H1 (cell line): ENCODE measurements at regions of chr1 and their contacts with region 1.

Region 1: DNA sequence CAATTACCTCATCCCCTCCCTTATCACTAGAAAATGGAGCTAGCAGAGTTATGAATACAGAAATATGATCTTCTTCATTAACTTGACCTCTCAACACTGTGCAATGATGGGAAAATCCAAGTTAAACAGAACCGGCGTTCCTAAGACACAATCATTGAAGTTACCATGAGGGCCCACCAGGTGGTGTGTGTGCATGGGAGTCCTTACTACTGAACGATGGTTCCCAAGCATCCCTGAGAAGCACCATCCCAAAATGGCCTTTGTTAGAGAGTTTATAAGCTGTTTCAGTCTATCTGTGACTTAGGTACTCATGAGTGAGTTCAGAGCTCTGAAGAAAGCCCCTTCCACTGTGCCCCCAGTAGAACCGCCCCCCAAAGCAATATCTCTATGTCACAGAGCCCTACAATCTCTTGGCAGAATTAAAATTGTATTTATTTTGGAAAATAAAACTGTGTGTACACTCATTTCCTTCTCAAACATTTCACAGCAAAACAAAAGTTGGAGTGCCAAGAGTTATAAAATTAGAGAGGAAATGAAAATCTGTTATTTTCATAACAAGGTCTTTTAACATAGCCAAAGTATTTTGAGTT is 56.8 kb downstream of the PLD5 start:
- DNase-seq: peak; percentile 13 to 66
- H3K4me3 ChIP-seq: no peak overlapping the region
- H3K27ac ChIP-seq: no peak overlapping the region
- H3K4me1 ChIP-seq: no peaks in the 10 kb centered on the region
- H3K27me3 ChIP-seq: no peaks in the 10 kb centered on the region
- CTCF ChIP-seq: peak; percentile 54 to 82 (median 73)
- EP300 ChIP-seq: no peak
- POLR2A ChIP-seq: no peak
- RAD21 ChIP-seq: peak; percentile 83 to 86

Region 2: GRCh38 chr1:242454262-242455045 is 13.2 kb before region 1 on chr1:
- CTCF ChIA-PET with region 1: interaction called, 57 read pairs
- POLR2A ChIA-PET with region 1: interaction called, 4 read pairs
- DNase-seq: no peak
- H3K4me3 ChIP-seq: no peak overlapping the region
- H3K27ac ChIP-seq: no peak overlapping the region
- H3K4me1 ChIP-seq: peaks cover 2 to 7% (median 3%) of the 10 kb centered on the region in 4 experiments; a peak in 4 of 7 replicates
- H3K27me3 ChIP-seq: no peaks in the 10 kb centered on the region
- CTCF ChIP-seq: peak in 2 of 3 experiments; percentile 62 to 68; a peak in 3 of 4 replicates
- EP300 ChIP-seq: no peak
- POLR2A ChIP-seq: no peak
- RAD21 ChIP-seq: peak; percentile 83 to 84

Region 3: DNA sequence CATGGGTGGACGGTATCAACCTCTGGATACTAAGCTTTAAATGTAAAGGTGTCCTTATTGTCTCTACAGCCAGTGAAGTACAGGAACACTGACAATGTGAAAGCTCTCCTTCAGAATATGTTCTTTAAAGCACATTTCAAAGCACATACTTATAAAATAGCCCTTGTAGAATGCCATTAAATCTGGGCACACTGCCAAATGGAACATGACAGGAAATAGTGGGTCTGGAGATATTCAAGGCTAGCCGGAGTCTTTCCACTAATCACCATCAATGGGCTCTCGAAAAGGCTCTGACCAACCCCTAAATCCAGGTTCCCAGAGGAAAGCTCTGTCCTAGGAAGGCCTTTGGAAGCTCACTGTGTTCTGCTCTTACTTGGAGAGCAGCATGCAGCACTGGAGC is 10.3 kb after region 1 on chr1:
- CTCF ChIA-PET with region 1: interaction called, 10 read pairs
- POLR2A ChIA-PET with region 1: no interaction called
- DNase-seq: no peak
- H3K4me3 ChIP-seq: no peak overlapping the region
- H3K27ac ChIP-seq: no peak overlapping the region
- H3K4me1 ChIP-seq: no peaks in the 10 kb centered on the region
- H3K27me3 ChIP-seq: no peaks in the 10 kb centered on the region
- CTCF ChIP-seq: no peak
- EP300 ChIP-seq: no peak
- POLR2A ChIP-seq: no peak
- RAD21 ChIP-seq: no peak

Region 4: GRCh38 chr1:242613266-242613815 is 145.7 kb after region 1 on chr1:
- CTCF ChIA-PET with region 1: no interaction called
- POLR2A ChIA-PET with region 1: no interaction called
- DNase-seq: no peak
- H3K4me3 ChIP-seq: no peak overlapping the region
- H3K27ac ChIP-seq: no peak overlapping the region
- H3K4me1 ChIP-seq: no peaks in the 10 kb centered on the region
- H3K27me3 ChIP-seq: no peaks in the 10 kb centered on the region
- CTCF ChIP-seq: no peak
- EP300 ChIP-seq: no peak
- POLR2A ChIP-seq: no peak
- RAD21 ChIP-seq: no peak